ENCODE measurements at regions of chr12 and their contacts with region 1.

Region 1: GRCh38 chr12:117836999-117837736 is 131.6 kb downstream of the KSR2 start:
- DNase-seq: peak; percentile 39
- ATAC-seq: peak; percentile 86
- H3K4me3 ChIP-seq: no peak overlapping the region
- H3K27ac ChIP-seq: no peak overlapping the region
- H3K4me1 ChIP-seq: peaks cover 3 to 15% of the 10 kb centered on the region in 2 experiments; a peak in 2 of 4 replicates
- H3K27me3 ChIP-seq: no peaks in the 10 kb centered on the region
- CTCF ChIP-seq: peak; percentile 89 to 99 (median 98)
- POLR2A ChIP-seq: no peak
- RAD21 ChIP-seq: peak; percentile 95

Region 2: DNA sequence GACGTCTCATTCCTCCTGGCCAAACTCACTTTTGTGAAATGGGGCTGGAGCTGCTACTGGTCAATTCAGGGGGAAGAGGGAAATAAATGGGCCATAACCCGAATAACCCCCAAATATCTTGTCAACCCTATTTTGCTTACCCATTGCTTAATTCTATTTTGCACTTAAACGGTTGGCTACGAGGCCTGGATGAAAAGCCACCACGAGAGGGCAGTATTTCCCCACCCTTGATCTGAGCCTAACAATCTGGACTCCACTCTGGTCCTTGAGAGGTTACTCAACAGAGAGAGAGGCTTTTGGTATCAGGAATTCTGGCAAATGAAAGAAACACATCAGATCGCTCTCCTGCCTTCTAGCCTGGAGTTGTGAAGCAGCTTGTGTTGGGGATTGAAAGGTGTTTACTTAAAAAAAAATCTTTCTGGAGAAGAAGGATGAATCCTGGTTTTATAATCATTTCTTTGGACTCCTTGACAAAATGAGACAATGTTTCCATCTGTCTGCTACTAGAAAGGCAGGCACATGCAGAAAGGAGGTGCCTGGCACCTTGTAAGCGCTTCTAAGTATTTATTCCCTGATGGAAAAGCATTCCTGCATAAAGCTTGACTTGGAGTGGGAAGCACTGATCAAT is 624.5 kb before region 1 on chr12:
- CTCF ChIA-PET with region 1: interaction called, 8 read pairs
- POLR2A ChIA-PET with region 1: no interaction called
- RAD21 ChIA-PET with region 1: no interaction called
- intact Hi-C with region 1: loop called (anchors 1 kb)
- DNase-seq: peak; percentile 68
- ATAC-seq: peak; percentile 93
- H3K4me3 ChIP-seq: no peak overlapping the region
- H3K27ac ChIP-seq: no peak overlapping the region
- H3K4me1 ChIP-seq: no peaks in the 10 kb centered on the region
- H3K27me3 ChIP-seq: peaks cover 9% of the 10 kb centered on the region; the same call in 1 of the 2 replicates
- CTCF ChIP-seq: peak; percentile 88 to 98 (median 91)
- POLR2A ChIP-seq: no peak
- RAD21 ChIP-seq: peak; percentile 92

Region 3: DNA sequence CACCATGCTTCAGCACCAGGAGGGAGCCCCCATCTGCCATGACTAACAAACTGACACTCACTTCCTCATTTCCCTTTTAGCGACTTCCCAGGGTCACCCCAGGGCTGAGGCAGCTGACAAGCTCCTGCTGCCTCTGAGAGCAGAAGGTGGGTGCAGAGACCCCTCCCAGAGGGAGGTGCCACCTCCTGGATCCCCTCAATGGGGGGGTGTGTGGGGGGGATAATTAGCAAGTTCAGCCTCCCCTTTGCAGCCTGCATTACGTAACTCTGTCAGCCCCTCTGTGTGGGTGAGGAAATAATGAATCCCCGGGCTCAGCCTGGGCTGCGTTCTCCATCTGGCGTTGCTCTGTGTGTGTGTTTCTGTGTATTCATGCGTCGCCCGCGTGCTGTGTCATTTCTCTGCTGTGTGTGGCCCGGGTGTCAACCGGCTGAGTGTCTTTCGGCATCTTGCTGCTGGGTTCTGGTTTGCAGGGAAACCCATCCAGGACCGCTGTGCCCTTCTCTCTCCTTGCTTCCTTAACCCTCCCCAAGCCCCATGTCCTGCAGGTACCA is 503.8 kb before region 1 on chr12:
- CTCF ChIA-PET with region 1: interaction called, 14 read pairs
- POLR2A ChIA-PET with region 1: no interaction called
- RAD21 ChIA-PET with region 1: no interaction called
- intact Hi-C with region 1: no loop called
- DNase-seq: no peak
- ATAC-seq: no peak
- H3K4me3 ChIP-seq: no peak overlapping the region
- H3K27ac ChIP-seq: no peak overlapping the region
- H3K4me1 ChIP-seq: no peaks in the 10 kb centered on the region
- H3K27me3 ChIP-seq: peaks cover 34% of the 10 kb centered on the region
- CTCF ChIP-seq: no peak
- POLR2A ChIP-seq: no peak
- RAD21 ChIP-seq: no peak

Region 4: DNA sequence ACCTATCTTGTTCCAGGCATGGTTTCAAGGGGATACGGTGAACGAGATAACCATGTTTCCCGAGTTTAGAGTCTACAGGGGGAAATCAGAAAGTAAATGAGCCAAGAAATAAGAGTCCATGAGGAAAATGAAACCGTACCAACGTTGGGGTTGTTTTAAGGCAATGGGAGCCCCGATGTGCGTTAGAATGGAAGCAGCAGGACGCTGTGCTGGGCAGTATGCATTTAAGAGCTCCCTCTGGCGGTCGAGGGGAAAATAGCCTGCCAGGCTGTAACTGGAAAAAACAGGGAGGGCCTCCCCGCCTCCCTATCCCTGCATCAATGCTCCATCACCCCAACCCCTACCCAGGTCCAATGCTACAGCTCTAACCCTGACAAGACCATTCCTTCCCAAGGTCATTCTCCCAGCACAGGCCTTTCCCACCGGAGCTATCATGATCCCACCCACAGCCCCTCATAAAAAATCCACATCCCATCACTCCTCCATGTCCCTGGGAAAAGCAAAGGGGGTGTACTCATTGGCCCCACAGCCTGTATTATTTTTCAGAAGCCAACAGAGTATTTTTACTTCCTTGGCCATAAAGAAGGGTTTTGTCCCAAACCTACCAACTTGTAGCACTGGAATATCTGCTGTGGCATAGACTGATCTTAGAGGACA is 249.4 kb before region 1 on chr12:
- CTCF ChIA-PET with region 1: interaction called, 9 read pairs
- POLR2A ChIA-PET with region 1: no interaction called
- RAD21 ChIA-PET with region 1: no interaction called
- intact Hi-C with region 1: loop called (anchors 5 kb)
- DNase-seq: peak; percentile 15
- ATAC-seq: peak; percentile 97
- H3K4me3 ChIP-seq: no peak overlapping the region
- H3K27ac ChIP-seq: no peak overlapping the region
- H3K4me1 ChIP-seq: no peaks in the 10 kb centered on the region
- H3K27me3 ChIP-seq: no peaks in the 10 kb centered on the region
- CTCF ChIP-seq: peak; percentile 76 to 91 (median 86); a peak in 5 of 6 replicates
- POLR2A ChIP-seq: no peak
- RAD21 ChIP-seq: peak; percentile 84

Region 5: DNA sequence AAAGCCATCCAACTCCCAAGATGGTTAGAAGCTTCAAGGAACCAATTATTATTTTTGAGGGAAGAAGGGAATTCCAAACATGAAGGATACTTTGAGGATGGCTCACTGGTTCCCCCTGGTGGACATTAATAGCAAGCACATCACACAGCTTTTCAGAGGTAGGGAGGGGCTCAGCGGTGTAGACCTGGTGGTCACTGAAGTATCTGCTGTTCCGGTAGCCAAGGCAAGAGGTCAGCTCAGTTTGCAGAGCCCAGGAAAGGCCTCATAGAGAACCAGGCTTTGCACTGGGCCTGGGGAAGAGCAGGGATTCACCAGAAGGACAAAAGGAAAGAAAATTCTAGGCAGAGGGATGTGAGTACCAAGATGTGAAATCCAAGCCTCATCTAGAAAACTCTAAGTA is 12.9 kb after region 1 on chr12:
- CTCF ChIA-PET with region 1: interaction called, 18 read pairs
- POLR2A ChIA-PET with region 1: no interaction called
- RAD21 ChIA-PET with region 1: no interaction called
- intact Hi-C with region 1: no loop called
- DNase-seq: peak; percentile 44
- ATAC-seq: peak; percentile 76
- H3K4me3 ChIP-seq: no peak overlapping the region
- H3K27ac ChIP-seq: no peak overlapping the region
- H3K4me1 ChIP-seq: peaks cover 0 to 20% of the 10 kb centered on the region in 2 experiments; a peak in 3 of 4 replicates
- H3K27me3 ChIP-seq: no peaks in the 10 kb centered on the region
- CTCF ChIP-seq: peak; percentile 66 to 92 (median 85); a peak in 5 of 6 replicates
- POLR2A ChIP-seq: no peak
- RAD21 ChIP-seq: peak; percentile 65

Measured in HCT116 (cell line).